ENCODE measurements at regions of chr15 and their contacts with region 1.

Region 1: GRCh38 chr15:100043015-100043641 is 298.6 kb downstream of the ADAMTS17 start:
- DNase-seq: peak; percentile 78 to 97
- H3K4me3 ChIP-seq: peak overlapping the region; percentile 50; the same call in 1 of the 2 replicates
- H3K27ac ChIP-seq: peak overlapping the region; percentile 93
- H3K4me1 ChIP-seq: peaks cover 34% of the 10 kb centered on the region
- H3K27me3 ChIP-seq: no peaks in the 10 kb centered on the region
- CTCF ChIP-seq: no peak

Region 2: GRCh38 chr15:100060276-100061255 is 17.4 kb after region 1 on chr15:
- CTCF ChIA-PET with region 1: no interaction called
- POLR2A ChIA-PET with region 1: interaction called, 3 read pairs
- intact Hi-C with region 1: loop called (anchors 2 kb)
- DNase-seq: peak in 1 of 2 experiments; percentile 50
- H3K4me3 ChIP-seq: no peak overlapping the region
- H3K27ac ChIP-seq: no peak overlapping the region
- H3K4me1 ChIP-seq: no peaks in the 10 kb centered on the region
- H3K27me3 ChIP-seq: peaks cover 20% of the 10 kb centered on the region
- CTCF ChIP-seq: no peak

Region 3: GRCh38 chr15:100078511-100079220 is 35.5 kb after region 1 on chr15:
- CTCF ChIA-PET with region 1: no interaction called
- POLR2A ChIA-PET with region 1: no interaction called
- intact Hi-C with region 1: loop called (anchors 2 kb)
- DNase-seq: peak in 1 of 2 experiments; percentile 79
- H3K4me3 ChIP-seq: no peak overlapping the region
- H3K27ac ChIP-seq: 0 out of 2 replicates have a peak overlapping the region, but pooled peaks have one; percentile 11
- H3K4me1 ChIP-seq: peaks cover 15% of the 10 kb centered on the region
- H3K27me3 ChIP-seq: no peaks in the 10 kb centered on the region
- CTCF ChIP-seq: no peak

Region 4: GRCh38 chr15:100241572-100242482 is 198.7 kb after region 1 on chr15:
- CTCF ChIA-PET with region 1: no interaction called
- POLR2A ChIA-PET with region 1: no interaction called
- intact Hi-C with region 1: no loop called
- DNase-seq: peak; percentile 43 to 66
- H3K4me3 ChIP-seq: no peak overlapping the region
- H3K27ac ChIP-seq: no peak overlapping the region
- H3K4me1 ChIP-seq: no peaks in the 10 kb centered on the region; the same call in 1 of the 2 replicates
- H3K27me3 ChIP-seq: no peaks in the 10 kb centered on the region
- CTCF ChIP-seq: no peak